T-cell (primary cell): ENCODE measurements at regions of chr3 and their contacts with region 1.

Region 1: DNA sequence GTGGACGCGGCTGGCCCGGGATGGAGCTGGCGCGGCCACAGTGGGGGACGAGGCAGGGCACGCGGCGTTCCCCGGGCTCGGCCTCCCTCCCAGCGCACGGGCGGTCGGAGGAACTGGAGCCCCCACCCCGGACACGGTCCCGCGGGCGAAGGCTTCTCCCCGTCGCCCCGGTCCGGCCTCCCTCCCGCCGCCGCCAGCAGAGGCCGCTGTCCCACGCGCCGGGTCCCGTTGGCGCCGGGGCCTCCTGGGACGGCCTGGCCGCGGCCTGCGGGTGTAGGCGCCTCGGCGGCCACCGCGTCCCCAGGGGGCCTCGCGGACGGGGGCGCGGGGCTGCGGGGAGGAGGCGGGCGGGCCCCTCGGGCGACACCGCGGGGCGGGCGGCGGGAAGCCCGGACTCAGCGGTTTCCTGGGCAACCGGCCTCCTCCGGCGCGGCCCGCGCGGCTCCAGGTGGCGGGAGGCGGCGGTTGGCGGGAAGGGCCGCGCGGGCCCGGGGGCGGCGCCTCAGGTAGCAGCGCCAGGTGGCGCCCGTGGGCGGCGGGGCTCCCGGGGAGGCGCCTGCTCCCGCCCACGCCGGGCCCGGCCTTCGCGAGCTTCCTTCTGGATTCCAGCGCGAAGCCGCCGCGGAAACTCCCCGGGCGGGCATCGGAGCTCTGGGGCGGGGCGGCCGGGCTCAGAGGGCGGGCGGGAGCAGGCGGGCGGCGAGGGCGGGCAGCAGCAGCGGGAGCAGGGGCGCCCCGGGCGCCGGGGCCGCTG is 26.7 kb downstream of the MELTF start:
- DNase-seq: peak; percentile 49 to 91 (median 72)
- ATAC-seq: peak; percentile 83 to 88 (median 84)
- H3K4me3 ChIP-seq: no peak overlapping the region
- H3K4me3 Mint-ChIP-seq: peak overlapping the region in 1 of 3 donors; percentile 76
- H3K27ac ChIP-seq: no peak overlapping the region
- H3K27ac Mint-ChIP-seq: no peak overlapping the region
- H3K4me1 ChIP-seq: peaks cover 0 to 12% of the 10 kb centered on the region in 2 experiments
- H3K4me1 Mint-ChIP-seq: peaks cover 11 to 13% (median 11%) of the 10 kb centered on the region in 3 donors
- H3K27me3 ChIP-seq: no peaks in the 10 kb centered on the region
- H3K27me3 Mint-ChIP-seq: no peaks in the 10 kb centered on the region

Region 2: DNA sequence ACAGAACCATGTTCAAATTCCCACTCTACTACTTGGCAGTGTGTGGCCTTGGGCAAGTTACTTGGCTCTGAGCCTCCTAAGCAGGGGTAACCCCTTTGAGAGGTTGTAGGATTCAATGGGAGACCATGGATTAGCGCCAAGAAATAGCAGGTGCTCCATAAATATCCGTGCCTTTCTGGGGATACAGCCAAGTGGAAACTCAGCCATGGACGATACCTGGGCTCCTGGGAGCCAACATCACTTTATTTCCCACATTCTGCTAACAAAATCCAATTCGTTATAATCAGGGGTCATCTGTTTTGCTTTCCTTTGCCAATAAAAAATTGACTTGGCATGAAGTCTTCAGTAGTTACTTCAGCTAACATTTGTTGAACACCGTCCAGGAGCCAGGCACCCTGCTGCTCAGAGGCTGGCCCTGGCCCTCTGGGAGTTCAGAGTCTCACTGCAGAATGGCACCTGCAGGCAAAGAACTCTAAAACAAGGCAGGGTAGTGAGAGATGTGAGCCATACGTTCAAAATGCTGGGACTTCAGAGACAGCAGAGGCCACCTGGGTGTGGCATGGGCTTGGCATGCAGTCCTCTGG is 834.0 kb before region 1 on chr3:
- CTCF ChIA-PET with region 1: no interaction called
- POLR2A ChIA-PET with region 1: interaction called in 1 of 2 experiments, 19 read pairs
- DNase-seq: no peak
- ATAC-seq: no peak
- H3K4me3 ChIP-seq: no peak overlapping the region
- H3K4me3 Mint-ChIP-seq: no peak overlapping the region
- H3K27ac ChIP-seq: no peak overlapping the region
- H3K27ac Mint-ChIP-seq: no peak overlapping the region
- H3K4me1 ChIP-seq: peaks cover 0 to 6% of the 10 kb centered on the region in 2 experiments
- H3K4me1 Mint-ChIP-seq: peaks cover 0 to 4% (median 1%) of the 10 kb centered on the region in 3 donors
- H3K27me3 ChIP-seq: peaks cover 0 to 3% of the 10 kb centered on the region in 2 experiments
- H3K27me3 Mint-ChIP-seq: no peaks in the 10 kb centered on the region